ENCODE measurements at regions of chr3 and their contacts with region 1.

Region 1: DNA sequence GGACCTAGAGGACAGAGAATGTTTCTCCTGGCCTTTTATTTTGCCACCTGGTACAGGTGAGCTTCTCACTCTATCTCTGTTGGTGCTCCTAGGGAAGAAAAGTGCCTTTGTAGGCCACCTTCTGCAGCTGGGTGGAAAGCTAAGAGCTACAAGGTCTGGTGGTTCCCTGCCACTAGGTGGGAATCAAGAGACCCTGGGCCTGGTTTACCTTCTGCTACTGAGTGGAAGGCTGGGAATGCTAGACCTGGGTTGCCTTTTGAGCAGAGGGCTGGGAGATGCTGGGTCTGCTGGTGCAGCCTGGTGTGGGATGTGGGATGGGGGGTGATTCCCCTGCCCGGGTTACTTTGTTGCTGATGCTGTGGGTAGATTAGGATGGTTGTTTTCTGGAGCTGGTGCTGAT is 72.6 kb downstream of the EBLN2 start:
- DNase-seq: no peak
- H3K4me3 ChIP-seq: no peak overlapping the region
- CTCF ChIP-seq: no peak
- POLR2A ChIP-seq: no peak

Region 2: DNA sequence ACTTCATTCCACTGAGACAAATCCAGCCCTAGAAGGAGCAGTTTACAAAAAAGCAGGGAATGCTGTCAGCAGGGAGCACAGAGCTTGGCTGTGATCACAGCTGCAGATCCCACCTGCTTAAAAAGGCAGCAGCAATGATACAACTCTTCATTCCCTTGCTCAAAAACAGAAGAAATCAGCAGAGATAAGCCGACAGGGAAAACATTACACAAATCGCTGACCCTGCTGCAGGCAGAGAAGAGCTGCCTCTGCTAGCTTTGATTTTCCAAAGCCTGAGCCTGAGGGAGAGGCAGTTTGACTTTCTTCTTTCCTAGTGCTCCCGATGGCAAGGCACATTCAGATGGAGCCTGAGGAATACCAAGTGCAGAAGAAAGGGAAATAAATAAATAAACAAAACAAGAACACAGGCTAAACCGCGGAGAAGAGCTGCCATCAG is 366.0 kb before region 1 on chr3:
- intact Hi-C with region 1: no loop called
- DNase-seq: no peak
- H3K4me3 ChIP-seq: no peak overlapping the region
- CTCF ChIP-seq: no peak
- POLR2A ChIP-seq: no peak

Region 3: GRCh38 chr3:72977060-72977808 is 156.8 kb before region 1 on chr3:
- intact Hi-C with region 1: no loop called
- DNase-seq: no peak
- H3K4me3 ChIP-seq: no peak overlapping the region
- CTCF ChIP-seq: no peak
- POLR2A ChIP-seq: no peak

Region 4: DNA sequence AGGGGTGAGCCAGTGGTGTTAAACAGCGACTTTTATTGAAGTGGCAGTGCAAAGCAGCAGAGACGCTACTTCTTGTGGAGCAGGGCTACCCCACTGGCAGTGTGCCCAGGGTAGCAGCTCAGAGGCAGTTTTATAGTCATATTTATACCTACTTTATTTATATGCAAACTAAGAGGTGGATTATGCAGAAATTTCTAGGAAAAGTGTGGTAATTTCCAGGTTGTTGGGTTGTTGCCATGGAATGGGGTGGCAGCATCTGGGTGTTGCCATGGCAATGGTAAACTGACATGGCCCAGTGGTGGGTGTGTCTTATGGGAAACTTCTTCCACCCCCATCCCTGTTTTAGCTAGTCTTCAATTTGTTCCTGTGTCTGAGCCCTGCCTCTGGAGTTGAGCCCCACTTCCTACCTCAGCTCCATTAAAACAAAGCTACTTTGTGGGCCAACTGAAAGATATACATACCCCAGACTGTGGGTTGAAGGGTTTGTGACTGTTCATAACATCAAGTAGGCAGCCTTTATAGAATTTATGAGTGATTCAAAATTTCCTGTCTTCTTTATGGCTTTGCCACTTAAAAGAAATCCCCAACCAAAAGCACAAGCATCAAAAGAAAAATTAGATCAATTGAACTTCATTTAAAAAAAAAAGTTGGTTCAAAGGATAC is 12.2 kb before region 1 on chr3:
- intact Hi-C with region 1: loop called (anchors 1 kb)
- DNase-seq: no peak
- H3K4me3 ChIP-seq: no peak overlapping the region
- CTCF ChIP-seq: no peak
- POLR2A ChIP-seq: no peak

Region 5: GRCh38 chr3:73144276-73144675 is 10.2 kb after region 1 on chr3:
- intact Hi-C with region 1: no loop called
- DNase-seq: no peak
- H3K4me3 ChIP-seq: no peak overlapping the region
- CTCF ChIP-seq: no peak
- POLR2A ChIP-seq: no peak

Region 6: DNA sequence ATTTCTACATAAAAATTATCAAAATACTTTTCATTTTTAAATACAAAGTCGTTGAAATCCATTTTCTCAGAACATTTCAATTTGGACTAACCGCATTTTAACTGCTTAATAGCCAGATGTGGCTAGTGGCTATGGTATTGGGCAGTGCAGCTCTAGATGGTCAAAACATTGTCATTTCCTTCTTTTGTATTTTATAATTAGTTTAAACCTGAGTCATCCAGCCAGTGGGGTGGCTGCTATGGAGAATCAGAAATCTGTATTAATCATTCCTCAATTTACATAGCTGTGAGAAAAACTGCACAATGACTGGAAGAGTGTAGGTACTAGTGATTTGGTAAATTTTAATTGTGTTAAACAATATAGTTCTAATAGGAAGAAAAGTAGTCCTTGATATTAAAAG is 245.4 kb after region 1 on chr3:
- intact Hi-C with region 1: no loop called
- DNase-seq: no peak
- H3K4me3 ChIP-seq: no peak overlapping the region
- CTCF ChIP-seq: no peak
- POLR2A ChIP-seq: no peak